Sigmoid colon (tissue), 7 donors: ENCODE measurements at regions of chr12 and their contacts with region 1.

Region 1: GRCh38 chr12:65169320-65170208 is at the start of gene LEMD3:
- DNase-seq: peak; percentile 96
- H3K4me3 ChIP-seq: peak within 1 kb of the TSS; percentile 70 to 99 (median 83)
- H3K27ac ChIP-seq: peak within 1 kb of the TSS; percentile 89 to 97 (median 93)
- H3K4me1 ChIP-seq: peaks cover 0 to 48% (median 35%) of the 10 kb centered on the region in 4 donors
- H3K27me3 ChIP-seq: no peaks in the 10 kb centered on the region
- CTCF ChIP-seq: no peak
- EP300 ChIP-seq: no peak
- POLR2A ChIP-seq: peak; percentile 82 to 88
- total RNA-seq, gene LEMD3: 17.7 to 32.7 (median 22.7) TPM

Region 2: DNA sequence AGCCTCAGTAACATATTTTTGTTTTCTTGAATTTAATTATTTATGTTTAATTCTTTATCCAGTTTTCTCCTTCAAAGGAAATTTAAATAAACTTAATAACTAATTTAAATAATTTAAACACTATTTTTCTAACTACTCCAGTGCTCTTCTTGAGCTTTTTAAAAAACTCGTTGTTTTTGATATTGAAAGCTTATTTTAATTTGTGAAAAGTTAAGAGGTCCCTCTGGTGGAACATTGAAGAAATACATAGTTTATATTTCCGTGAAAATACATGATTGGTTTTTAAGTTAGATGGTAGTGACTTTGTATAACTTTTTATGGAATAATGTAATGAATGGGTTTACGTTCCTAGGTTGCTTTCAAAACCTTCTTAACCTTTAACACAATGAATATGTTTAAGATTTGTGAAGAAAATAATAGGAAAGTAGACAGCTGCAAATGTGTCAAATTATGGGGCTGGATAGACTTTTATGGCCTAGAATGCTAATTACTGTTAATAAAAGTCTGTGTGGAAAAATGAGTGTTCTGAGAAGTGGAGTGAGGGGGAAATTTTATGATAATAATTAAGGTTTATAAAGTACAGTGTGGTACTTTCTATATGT is 63.0 kb after region 1 on chr12:
- intact Hi-C with region 1: loop called (anchors 5 kb)
- DNase-seq: no peak
- H3K4me3 ChIP-seq: no peak overlapping the region
- H3K27ac ChIP-seq: no peak overlapping the region
- H3K4me1 ChIP-seq: no peaks in the 10 kb centered on the region
- H3K27me3 ChIP-seq: no peaks in the 10 kb centered on the region
- CTCF ChIP-seq: peak in 2 of 4 experiments; percentile 14 to 42
- EP300 ChIP-seq: no peak
- POLR2A ChIP-seq: no peak

Region 3: DNA sequence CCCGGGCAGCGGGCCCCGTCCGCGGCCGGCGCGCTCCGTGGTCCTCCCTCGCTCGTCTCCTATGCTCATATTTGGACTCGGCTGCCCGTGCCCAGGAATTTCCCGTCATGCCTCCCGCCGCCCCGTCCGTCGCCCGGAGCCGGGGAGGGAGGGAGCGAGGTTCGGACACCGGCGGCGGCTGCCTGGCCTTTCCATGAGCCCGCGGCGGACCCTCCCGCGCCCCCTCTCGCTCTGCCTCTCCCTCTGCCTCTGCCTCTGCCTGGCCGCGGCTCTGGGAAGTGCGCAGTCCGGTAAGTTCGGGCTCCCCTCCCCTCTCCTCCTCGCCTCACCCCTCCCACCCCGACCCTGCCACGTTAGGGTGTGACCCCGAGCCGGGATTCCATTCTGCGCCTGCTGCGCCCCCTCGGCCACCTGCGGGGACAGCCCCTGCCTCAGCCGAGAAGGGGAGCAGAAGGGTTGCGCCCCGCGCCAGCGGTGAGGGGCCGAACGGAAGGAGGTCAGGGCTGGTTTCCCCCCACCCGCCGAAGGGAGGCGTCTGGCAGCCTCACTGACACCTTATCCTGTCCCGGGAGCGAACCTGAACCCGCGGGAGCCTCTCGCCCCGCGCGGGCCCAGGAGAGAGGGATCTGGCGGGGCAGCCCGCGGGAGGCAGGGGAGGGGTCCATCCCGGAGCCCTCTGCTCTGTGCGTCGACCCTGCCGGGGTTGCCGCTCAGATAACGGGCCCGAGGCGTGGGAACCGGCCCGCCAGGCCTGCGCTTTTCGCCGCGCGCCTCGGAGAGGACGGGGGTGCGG is 109.2 kb after region 1 on chr12 and contains the start of gene MSRB3:
- intact Hi-C with region 1: loop called (anchors 5 kb)
- DNase-seq: peak; percentile 92
- H3K4me3 ChIP-seq: peak within 1 kb of the TSS; percentile 82 to 97 (median 93)
- H3K27ac ChIP-seq: peak within 1 kb of the TSS; percentile 96 to 98 (median 98)
- H3K4me1 ChIP-seq: peaks cover 0 to 51% (median 43%) of the 10 kb centered on the region in 4 donors
- H3K27me3 ChIP-seq: no peaks in the 10 kb centered on the region
- CTCF ChIP-seq: no peak
- EP300 ChIP-seq: peak in 1 of 4 donors; percentile 23
- POLR2A ChIP-seq: peak; percentile 80 to 89
- total RNA-seq, gene MSRB3: 159 to 232 (median 223) TPM

Region 4: GRCh38 chr12:65470256-65470655 is 300.7 kb after region 1 on chr12:
- intact Hi-C with region 1: loop called (anchors 10 kb)
- DNase-seq: no peak
- H3K4me3 ChIP-seq: no peak overlapping the region
- H3K27ac ChIP-seq: no peak overlapping the region
- H3K4me1 ChIP-seq: peaks cover 0 to 12% (median 9%) of the 10 kb centered on the region in 4 donors
- H3K27me3 ChIP-seq: no peaks in the 10 kb centered on the region
- CTCF ChIP-seq: no peak
- EP300 ChIP-seq: peak in 1 of 4 donors; percentile 67
- POLR2A ChIP-seq: no peak

Region 5: GRCh38 chr12:65536876-65537661 is 367.5 kb after region 1 on chr12:
- intact Hi-C with region 1: loop called (anchors 10 kb)
- DNase-seq: peak; percentile 81
- H3K4me3 ChIP-seq: no peak overlapping the region
- H3K27ac ChIP-seq: peak overlapping the region; percentile 9 to 68 (median 61)
- H3K4me1 ChIP-seq: peaks cover 0 to 17% (median 9%) of the 10 kb centered on the region in 4 donors
- H3K27me3 ChIP-seq: no peaks in the 10 kb centered on the region
- CTCF ChIP-seq: no peak
- EP300 ChIP-seq: peak; percentile 74 to 95 (median 88)
- POLR2A ChIP-seq: no peak

Region 6: DNA sequence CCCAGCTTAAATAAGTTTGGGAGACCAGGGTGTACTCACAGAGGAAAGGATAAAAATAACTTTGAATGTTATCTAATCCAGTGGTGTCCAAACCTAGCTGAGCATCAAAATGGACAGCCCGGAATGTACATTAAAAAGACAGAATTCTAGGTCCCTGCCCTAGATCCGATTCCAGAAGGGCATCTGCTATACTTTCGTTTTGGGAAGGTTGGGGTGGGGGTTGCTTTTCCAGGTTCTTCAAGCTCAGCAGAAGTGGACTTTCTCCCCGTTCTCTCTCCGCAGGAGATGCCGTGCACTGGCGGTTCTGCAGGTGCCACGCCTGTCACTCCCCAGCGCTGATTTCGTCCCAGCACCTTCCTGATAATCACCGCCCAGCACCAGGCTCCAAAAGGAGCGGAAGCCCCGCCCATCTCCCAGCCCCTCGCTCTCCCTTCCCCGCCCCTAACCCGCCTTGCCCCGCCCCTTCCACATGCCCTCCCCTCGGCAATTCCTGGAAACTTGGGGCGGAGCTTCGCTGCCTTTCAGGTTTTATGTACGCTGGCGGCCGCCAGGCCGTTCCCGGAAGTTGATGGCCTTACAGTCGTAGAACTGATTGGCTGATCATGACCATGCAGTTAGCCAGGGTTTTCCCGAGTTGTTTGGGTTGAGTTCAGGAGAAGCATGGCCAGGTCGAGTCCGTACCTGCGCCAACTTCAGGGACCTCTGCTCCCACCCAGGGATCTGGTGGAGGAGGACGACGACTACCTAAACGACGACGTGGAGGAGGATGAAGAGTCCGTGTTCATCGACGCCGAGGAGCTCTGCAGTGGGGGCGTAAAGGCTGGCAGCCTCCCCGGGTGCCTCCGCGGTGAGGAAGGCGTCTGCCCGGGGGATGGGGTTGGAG is 1132.6 kb after region 1 on chr12 and contains the start of gene HELB:
- intact Hi-C with region 1: loop called (anchors 5 kb)
- DNase-seq: peak; percentile 99
- H3K4me3 ChIP-seq: peak within 1 kb of the TSS; percentile 51 to 75 (median 62)
- H3K27ac ChIP-seq: peak within 1 kb of the TSS; percentile 81 to 82 (median 82)
- H3K4me1 ChIP-seq: peaks cover 0 to 19% (median 10%) of the 10 kb centered on the region in 4 donors
- H3K27me3 ChIP-seq: no peaks in the 10 kb centered on the region
- CTCF ChIP-seq: no peak
- EP300 ChIP-seq: peak in 1 of 4 donors; percentile 12
- POLR2A ChIP-seq: peak in 1 of 2 donors; percentile 45
- total RNA-seq, gene HELB: 3.2 to 8.6 (median 4.4) TPM